Heart right ventricle (tissue), 16 donors: ENCODE measurements at regions of chr2 and their contacts with region 1.

Region 1: DNA sequence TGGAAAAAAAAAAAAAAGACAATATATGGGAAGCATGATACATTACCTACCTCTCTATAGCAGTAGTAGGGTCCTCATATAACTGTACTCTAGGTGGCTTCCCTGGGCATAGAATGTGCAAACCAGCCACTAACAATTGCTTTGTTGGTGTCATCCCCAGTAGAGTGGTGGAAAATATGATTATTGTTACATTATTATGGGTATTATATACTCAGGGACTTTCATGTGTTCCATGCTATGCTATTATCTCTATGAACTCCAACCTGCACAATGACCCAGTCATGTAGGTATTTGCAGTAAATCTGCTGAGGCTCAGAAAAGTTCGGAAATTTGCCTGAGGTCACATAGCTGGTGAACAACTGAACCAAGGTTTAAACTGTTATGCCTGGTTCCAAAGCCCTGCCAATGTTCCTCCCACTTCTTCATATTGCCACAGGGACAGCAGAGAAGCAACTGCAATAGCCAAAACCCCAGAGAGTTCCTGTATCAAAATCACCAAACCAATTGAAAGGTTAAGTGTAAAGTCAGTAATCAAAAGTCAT is 52.6 kb upstream of the MAP4K4 start:
- DNase-seq: no peak
- ATAC-seq: no peak
- H3K4me3 ChIP-seq: no peak overlapping the region
- H3K27ac ChIP-seq: no peak overlapping the region
- H3K4me1 ChIP-seq: no peaks in the 10 kb centered on the region
- H3K27me3 ChIP-seq: no peaks in the 10 kb centered on the region
- CTCF ChIP-seq: no peak

Region 2: GRCh38 chr2:99786636-99787390 is 1858.1 kb before region 1 on chr2:
- intact Hi-C with region 1: no loop called
- DNase-seq: no peak
- ATAC-seq: no peak
- H3K4me3 ChIP-seq: no peak overlapping the region
- H3K27ac ChIP-seq: no peak overlapping the region
- H3K4me1 ChIP-seq: peaks cover 0 to 27% (median 10%) of the 10 kb centered on the region in 9 donors
- H3K27me3 ChIP-seq: no peaks in the 10 kb centered on the region
- CTCF ChIP-seq: no peak

Region 3: GRCh38 chr2:101435001-101435862 is 209.7 kb before region 1 on chr2:
- intact Hi-C with region 1: no loop called
- DNase-seq: peak; percentile 27 to 31
- ATAC-seq: peak; percentile 44 to 72 (median 51)
- H3K4me3 ChIP-seq: peak overlapping the region in 7 of 10 donors; percentile 23 to 46 (median 32)
- H3K27ac ChIP-seq: peak overlapping the region in 6 of 10 donors; percentile 9 to 67 (median 48)
- H3K4me1 ChIP-seq: peaks cover 0 to 30% (median 18%) of the 10 kb centered on the region in 9 donors
- H3K27me3 ChIP-seq: peaks cover 0 to 18% (median 0%) of the 10 kb centered on the region in 7 donors
- CTCF ChIP-seq: no peak

Region 4: GRCh38 chr2:101597351-101597944 is 47.5 kb before region 1 on chr2:
- intact Hi-C with region 1: loop called in 1 of 10 experiments (anchors 5 kb)
- DNase-seq: peak; percentile 22 to 71
- ATAC-seq: peak; percentile 74 to 99 (median 94)
- H3K4me3 ChIP-seq: no peak overlapping the region
- H3K27ac ChIP-seq: peak overlapping the region in 7 of 10 donors; percentile 16 to 74 (median 60)
- H3K4me1 ChIP-seq: peaks cover 0 to 16% (median 8%) of the 10 kb centered on the region in 9 donors
- H3K27me3 ChIP-seq: peaks cover 0 to 6% (median 0%) of the 10 kb centered on the region in 7 donors
- CTCF ChIP-seq: no peak